T-cell (primary cell): ENCODE measurements at regions of chr1 and their contacts with region 1.

Region 1: GRCh38 chr1:224541901-224542630 is 74.1 kb upstream of the CNIH3 start:
- DNase-seq: no peak
- ATAC-seq: no peak
- H3K4me3 ChIP-seq: no peak overlapping the region
- H3K4me3 Mint-ChIP-seq: no peak overlapping the region
- H3K27ac ChIP-seq: no peak overlapping the region
- H3K27ac Mint-ChIP-seq: no peak overlapping the region
- H3K4me1 ChIP-seq: peaks cover 0 to 3% of the 10 kb centered on the region in 2 experiments
- H3K4me1 Mint-ChIP-seq: peaks cover 5 to 11% (median 8%) of the 10 kb centered on the region in 3 donors
- H3K27me3 ChIP-seq: no peaks in the 10 kb centered on the region
- H3K27me3 Mint-ChIP-seq: peaks cover 11 to 14% of the 10 kb centered on the region in 2 donors

Region 2: GRCh38 chr1:224497714-224498573 is 44.1 kb before region 1 on chr1:
- CTCF ChIA-PET with region 1: interaction called in 1 of 2 experiments, 13 read pairs
- POLR2A ChIA-PET with region 1: no interaction called
- DNase-seq: peak in 25 of 35 experiments; percentile 4 to 41 (median 20)
- ATAC-seq: peak; percentile 67 to 94 (median 88)
- H3K4me3 ChIP-seq: no peak overlapping the region
- H3K4me3 Mint-ChIP-seq: peak overlapping the region in 2 of 3 donors; percentile 14 to 30
- H3K27ac ChIP-seq: peak overlapping the region; percentile 43
- H3K27ac Mint-ChIP-seq: peak overlapping the region; percentile 72 to 73
- H3K4me1 ChIP-seq: peaks cover 0 to 18% of the 10 kb centered on the region in 2 experiments
- H3K4me1 Mint-ChIP-seq: peaks cover 23 to 34% (median 28%) of the 10 kb centered on the region in 3 donors
- H3K27me3 ChIP-seq: no peaks in the 10 kb centered on the region
- H3K27me3 Mint-ChIP-seq: peaks cover 0 to 3% of the 10 kb centered on the region in 2 donors

Region 3: GRCh38 chr1:224592636-224593582 is 50.8 kb after region 1 on chr1:
- CTCF ChIA-PET with region 1: no interaction called
- POLR2A ChIA-PET with region 1: interaction called in 1 of 2 experiments, 12 read pairs
- DNase-seq: no peak
- ATAC-seq: no peak
- H3K4me3 ChIP-seq: no peak overlapping the region
- H3K4me3 Mint-ChIP-seq: no peak overlapping the region
- H3K27ac ChIP-seq: no peak overlapping the region
- H3K27ac Mint-ChIP-seq: no peak overlapping the region
- H3K4me1 ChIP-seq: no peaks in the 10 kb centered on the region
- H3K4me1 Mint-ChIP-seq: peaks cover 0 to 2% (median 0%) of the 10 kb centered on the region in 3 donors
- H3K27me3 ChIP-seq: no peaks in the 10 kb centered on the region
- H3K27me3 Mint-ChIP-seq: no peaks in the 10 kb centered on the region